AG04449 (cell line): ENCODE measurements at regions of chr22 and their contacts with region 1.

Region 1: GRCh38 chr22:21972293-21972779 is 10.3 kb downstream of the TOP3B start:
- DNase-seq: no peak
- H3K4me3 ChIP-seq: no peak overlapping the region
- CTCF ChIP-seq: peak; percentile 85

Region 2: GRCh38 chr22:21947040-21948014 is 25.0 kb before region 1 on chr22:
- CTCF ChIA-PET with region 1: interaction called, 65 read pairs
- POLR2A ChIA-PET with region 1: no interaction called
- DNase-seq: no peak
- H3K4me3 ChIP-seq: no peak overlapping the region
- CTCF ChIP-seq: peak; percentile 59

Region 3: DNA sequence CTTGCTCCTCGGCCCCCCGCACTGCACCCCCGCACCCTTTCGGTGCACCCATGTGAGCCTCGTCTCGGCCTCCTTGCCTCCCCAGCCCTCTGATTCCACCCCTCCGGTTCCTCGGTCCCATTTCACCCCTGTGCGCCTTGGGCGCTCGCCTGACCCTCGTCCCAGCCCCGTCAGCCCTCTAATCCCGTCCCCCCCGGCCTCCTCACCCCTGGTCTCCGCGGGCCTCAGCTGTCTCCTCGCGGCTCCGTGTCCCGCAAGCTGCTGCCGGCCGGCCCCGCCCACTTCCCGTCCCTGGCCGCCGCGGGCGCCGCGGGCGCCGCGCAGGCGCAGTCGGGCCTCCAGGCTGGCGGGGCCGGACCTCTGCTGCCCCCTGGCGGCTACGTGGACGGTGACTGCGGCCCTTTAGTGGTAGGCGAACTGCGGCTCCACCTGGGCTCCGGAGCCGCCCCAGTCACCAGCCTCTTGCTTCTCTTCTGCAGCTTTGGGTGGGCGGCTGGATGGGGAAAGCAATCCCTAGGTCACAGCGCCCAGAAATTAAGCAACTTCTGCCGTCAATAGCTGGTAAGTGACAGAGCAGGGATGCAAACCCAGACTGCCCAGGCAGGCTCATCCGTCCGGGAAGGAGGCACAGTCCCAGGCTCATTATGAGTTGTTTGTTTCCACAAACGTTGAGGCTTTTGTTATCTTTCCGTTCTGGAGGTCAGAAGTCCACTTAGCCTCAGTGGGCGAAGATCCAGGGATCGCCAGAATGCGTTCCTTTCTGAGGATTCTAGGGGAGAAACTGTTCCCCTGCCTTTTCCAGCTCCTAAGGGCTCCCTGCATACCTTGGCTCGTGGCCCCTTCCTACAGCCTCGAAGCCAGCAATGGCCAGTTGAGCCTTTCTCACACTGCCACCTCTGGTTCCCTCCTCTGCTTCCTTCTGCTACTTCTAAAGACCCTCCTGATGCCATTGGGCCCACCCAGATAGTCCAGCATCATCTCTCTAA is 19.5 kb before region 1 on chr22 and contains the start of gene PPM1F:
- CTCF ChIA-PET with region 1: interaction called, 65 read pairs
- POLR2A ChIA-PET with region 1: no interaction called
- DNase-seq: no peak
- H3K4me3 ChIP-seq: peak within 1 kb of the TSS; percentile 82
- CTCF ChIP-seq: peak; percentile 89

Region 4: GRCh38 chr22:21961886-21962654 is 10.3 kb before region 1 on chr22:
- CTCF ChIA-PET with region 1: interaction called, 31 read pairs
- POLR2A ChIA-PET with region 1: no interaction called
- DNase-seq: no peak
- H3K4me3 ChIP-seq: no peak overlapping the region
- CTCF ChIP-seq: no peak

Region 5: DNA sequence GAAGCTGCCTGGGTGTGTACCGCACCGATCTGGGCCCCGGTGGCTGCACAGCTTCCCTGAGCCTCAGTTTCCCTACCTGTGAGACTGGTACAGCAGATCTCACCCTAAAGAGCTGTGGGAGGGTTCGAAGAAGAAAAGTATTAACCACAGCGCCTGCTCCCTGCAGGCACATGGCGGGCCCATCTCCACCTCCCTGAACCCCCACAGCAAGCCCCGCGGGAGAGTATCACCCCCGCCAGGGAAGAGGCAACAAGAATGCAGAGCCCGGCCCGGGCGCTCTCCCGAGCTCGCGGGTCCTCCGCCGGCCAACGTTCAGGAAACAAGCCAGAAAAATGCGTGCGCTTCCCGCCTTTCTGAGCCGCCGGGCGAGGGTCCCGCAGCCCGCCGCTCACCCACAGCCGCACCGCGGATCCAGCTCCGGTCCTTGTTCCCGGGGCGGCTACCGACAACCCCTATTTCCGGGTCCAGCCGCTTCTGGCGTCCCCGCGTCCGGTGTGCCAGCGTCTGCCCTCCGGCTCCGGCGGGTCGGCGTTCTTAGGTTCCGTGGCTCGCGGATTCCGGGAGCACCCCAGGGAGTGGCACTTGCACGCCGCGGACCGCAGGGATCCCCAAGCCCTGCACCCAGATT is 10.1 kb after region 1 on chr22 and contains the start of gene TOP3B:
- CTCF ChIA-PET with region 1: interaction called, 67 read pairs
- POLR2A ChIA-PET with region 1: no interaction called
- DNase-seq: no peak
- H3K4me3 ChIP-seq: peak within 1 kb of the TSS; percentile 95
- CTCF ChIP-seq: no peak

Region 6: DNA sequence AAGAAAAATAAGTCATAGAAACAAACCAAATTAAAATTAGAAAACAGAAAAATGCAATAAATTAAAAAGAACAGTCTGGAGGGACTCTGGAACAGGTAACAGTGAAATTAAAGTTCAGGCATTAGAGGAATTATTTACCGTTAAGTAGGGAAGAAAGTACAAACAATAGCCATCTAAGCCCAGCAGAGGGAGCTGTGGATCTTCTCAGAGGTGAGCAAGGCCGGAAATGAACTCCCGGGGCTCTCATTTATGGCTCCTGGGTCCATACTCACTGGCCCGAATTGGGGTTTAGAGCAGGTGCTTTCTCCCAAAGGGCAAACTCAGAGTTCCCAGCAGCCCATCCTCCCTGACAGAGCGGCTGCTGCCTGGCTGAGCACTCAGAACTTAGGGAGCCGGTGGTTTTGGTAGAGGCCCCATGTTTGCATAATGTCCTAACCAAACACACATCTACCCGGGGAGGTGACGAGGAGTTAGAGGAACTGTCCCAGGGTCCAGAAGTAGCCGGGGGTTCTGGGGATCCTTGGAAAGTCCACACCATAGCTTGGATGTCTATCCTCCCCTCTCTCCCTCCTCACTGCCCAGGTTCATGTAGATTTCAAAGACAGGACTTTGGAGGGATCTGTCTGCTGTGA is 184.5 kb after region 1 on chr22:
- CTCF ChIA-PET with region 1: no interaction called
- POLR2A ChIA-PET with region 1: no interaction called
- DNase-seq: peak; percentile 19
- H3K4me3 ChIP-seq: no peak overlapping the region
- CTCF ChIP-seq: peak; percentile 63